MCF 10A (cell line): ENCODE measurements at regions of chr7 and their contacts with region 1.

Region 1: DNA sequence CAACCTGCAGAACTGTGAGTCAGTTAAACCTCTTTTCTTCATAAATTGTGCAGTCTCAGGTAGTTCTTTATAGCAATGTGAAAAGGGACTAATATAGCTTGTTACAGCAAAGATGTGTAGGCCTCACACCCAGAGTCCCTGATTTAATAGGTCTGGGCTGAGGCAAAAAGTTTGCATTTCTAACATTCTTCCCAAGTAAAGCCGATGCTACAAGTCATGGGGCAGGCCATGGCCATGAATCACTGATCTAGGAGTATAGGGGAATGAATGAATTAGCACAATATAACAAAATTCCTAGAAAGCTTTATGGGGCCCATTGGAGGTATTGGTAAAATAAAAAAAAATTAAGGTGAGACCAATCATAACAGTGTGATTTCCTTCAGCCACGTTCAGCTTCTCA is 11.5 kb upstream of the AASS start:
- DNase-seq: no peak
- H3K4me3 Mint-ChIP-seq: no peak overlapping the region
- H3K27ac Mint-ChIP-seq: no peak overlapping the region
- H3K4me1 Mint-ChIP-seq: no peaks in the 10 kb centered on the region
- H3K27me3 Mint-ChIP-seq: peaks cover 4% of the 10 kb centered on the region
- CTCF ChIP-seq: no peak

Region 2: GRCh38 chr7:122100021-122100420 is 55.5 kb before region 1 on chr7:
- CTCF ChIA-PET with region 1: no interaction called
- POLR2A ChIA-PET with region 1: no interaction called
- intact Hi-C with region 1: no loop called
- DNase-seq: no peak
- H3K4me3 Mint-ChIP-seq: no peak overlapping the region
- H3K27ac Mint-ChIP-seq: no peak overlapping the region
- H3K4me1 Mint-ChIP-seq: no peaks in the 10 kb centered on the region
- H3K27me3 Mint-ChIP-seq: no peaks in the 10 kb centered on the region
- CTCF ChIP-seq: no peak

Region 3: GRCh38 chr7:122143751-122144711 is 11.5 kb before region 1 on chr7 and contains the start of gene AASS:
- CTCF ChIA-PET with region 1: interaction called, 3 read pairs
- POLR2A ChIA-PET with region 1: interaction called, 12 read pairs
- intact Hi-C with region 1: no loop called
- DNase-seq: peak; percentile 97
- H3K4me3 Mint-ChIP-seq: peak within 1 kb of the TSS; percentile 92
- H3K27ac Mint-ChIP-seq: peak within 1 kb of the TSS; percentile 90
- H3K4me1 Mint-ChIP-seq: peaks cover 24% of the 10 kb centered on the region
- H3K27me3 Mint-ChIP-seq: no peaks in the 10 kb centered on the region
- CTCF ChIP-seq: no peak
- total RNA-seq, gene AASS: 15.6 and 18.4 TPM in 2 replicates